Psoas muscle (tissue), 8 donors: ENCODE measurements at regions of chr18 and their contacts with region 1.

Region 1: GRCh38 chr18:62522504-62523254 is at the start of gene ZCCHC2:
- DNase-seq: peak; percentile 98 to 99
- ATAC-seq: peak; percentile 78 to 87 (median 80)
- H3K4me3 ChIP-seq: peak within 1 kb of the TSS; percentile 95
- H3K27ac ChIP-seq: peak within 1 kb of the TSS; percentile 99
- H3K4me1 ChIP-seq: peaks cover 24% of the 10 kb centered on the region
- H3K27me3 ChIP-seq: no peaks in the 10 kb centered on the region
- CTCF ChIP-seq: no peak
- total RNA-seq, gene ZCCHC2: 19.4 to 38.2 (median 32.1) TPM

Region 2: DNA sequence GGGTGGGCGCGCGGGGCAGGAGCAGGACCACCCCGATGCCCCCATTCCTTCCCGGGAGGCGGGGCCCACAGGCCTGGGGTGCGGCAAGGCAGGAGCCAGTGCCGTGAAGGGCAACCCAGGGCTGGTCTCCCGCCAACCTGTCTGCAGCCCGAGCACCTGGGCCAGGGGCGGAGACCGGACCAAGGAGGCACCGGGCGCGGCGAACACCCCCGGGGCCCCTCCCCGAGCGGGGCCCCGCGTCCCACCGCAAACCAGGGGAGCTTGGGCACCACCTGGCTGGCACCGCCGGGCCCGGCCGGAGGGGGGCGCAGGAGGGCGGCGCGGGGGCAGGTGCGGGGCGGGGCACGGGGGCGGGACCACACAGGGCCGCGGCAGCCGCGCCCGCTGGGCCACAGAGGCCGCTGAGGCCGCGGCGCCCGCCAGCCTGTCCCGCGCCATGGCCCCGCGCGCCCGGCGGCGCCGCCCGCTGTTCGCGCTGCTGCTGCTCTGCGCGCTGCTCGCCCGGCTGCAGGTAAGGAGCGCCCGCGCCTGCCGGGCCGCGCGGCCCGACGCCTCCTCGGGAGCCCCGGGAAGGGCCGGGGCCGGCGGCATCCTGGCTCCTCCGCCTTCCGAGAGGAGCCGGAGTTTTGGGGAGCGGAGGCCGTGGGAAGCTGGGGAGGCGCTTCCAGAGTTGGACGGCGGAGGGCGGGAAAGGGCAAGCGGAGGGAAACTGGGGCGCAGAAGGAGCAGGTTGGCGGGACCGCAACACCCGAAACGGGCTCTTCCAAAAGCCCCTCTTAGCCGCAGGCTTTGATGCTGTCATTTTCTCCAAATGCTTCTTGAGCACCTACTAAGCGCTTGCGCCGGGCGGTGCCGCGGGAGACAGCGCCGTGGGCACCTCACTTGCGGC is 197.5 kb before region 1 on chr18 and contains the start of gene TNFRSF11A:
- intact Hi-C with region 1: loop called in 1 of 2 experiments (anchors 10 kb)
- DNase-seq: peak; percentile 34 to 58
- ATAC-seq: peak; percentile 72 to 90 (median 77)
- H3K4me3 ChIP-seq: peak within 1 kb of the TSS; percentile 66
- H3K27ac ChIP-seq: no peak within 1 kb of the TSS
- H3K4me1 ChIP-seq: peaks cover 17% of the 10 kb centered on the region
- H3K27me3 ChIP-seq: peaks cover 4 to 85% (median 25%) of the 10 kb centered on the region in 3 donors
- CTCF ChIP-seq: peak; percentile 30
- total RNA-seq, gene TNFRSF11A: 0.60 to 1.3 (median 1.0) TPM

Region 3: GRCh38 chr18:62450546-62451406 is 71.9 kb before region 1 on chr18:
- intact Hi-C with region 1: loop called (anchors 1 to 5 kb)
- DNase-seq: peak; percentile 85 to 92
- ATAC-seq: peak; percentile 93 to 96 (median 94)
- H3K4me3 ChIP-seq: no peak overlapping the region
- H3K27ac ChIP-seq: peak overlapping the region; percentile 87
- H3K4me1 ChIP-seq: peaks cover 26% of the 10 kb centered on the region
- H3K27me3 ChIP-seq: no peaks in the 10 kb centered on the region
- CTCF ChIP-seq: no peak

Region 4: GRCh38 chr18:62566199-62566598 is 43.5 kb after region 1 on chr18:
- intact Hi-C with region 1: loop called in 1 of 2 experiments (anchors 5 kb)
- DNase-seq: peak in 1 of 2 donors; percentile 69
- ATAC-seq: peak in 3 of 4 donors; percentile 68 to 86 (median 80)
- H3K4me3 ChIP-seq: no peak overlapping the region
- H3K27ac ChIP-seq: no peak overlapping the region
- H3K4me1 ChIP-seq: no peaks in the 10 kb centered on the region
- H3K27me3 ChIP-seq: no peaks in the 10 kb centered on the region
- CTCF ChIP-seq: peak; percentile 45

Region 5: GRCh38 chr18:63262369-63263335 is 740.0 kb after region 1 on chr18:
- intact Hi-C with region 1: loop called in 1 of 2 experiments (anchors 5 kb)
- DNase-seq: peak; percentile 28 to 63
- ATAC-seq: peak; percentile 87 to 91 (median 90)
- H3K4me3 ChIP-seq: peak overlapping the region; percentile 11
- H3K27ac ChIP-seq: peak overlapping the region; percentile 79
- H3K4me1 ChIP-seq: peaks cover 50% of the 10 kb centered on the region
- H3K27me3 ChIP-seq: no peaks in the 10 kb centered on the region
- CTCF ChIP-seq: peak; percentile 23